ENCODE measurements at regions of chr7 and their contacts with region 1.

Region 1: GRCh38 chr7:38178004-38178694 is at the start of gene STARD3NL:
- DNase-seq: peak; percentile 92
- H3K4me3 Mint-ChIP-seq: peak within 1 kb of the TSS; percentile 96
- H3K27ac Mint-ChIP-seq: peak within 1 kb of the TSS; percentile 90
- H3K4me1 Mint-ChIP-seq: peaks cover 32% of the 10 kb centered on the region
- H3K27me3 Mint-ChIP-seq: peaks cover 9% of the 10 kb centered on the region
- total RNA-seq, gene STARD3NL: 34.4 to 34.7 TPM

Region 2: GRCh38 chr7:38107486-38107893 is 70.7 kb before region 1 on chr7:
- CTCF ChIA-PET with region 1: interaction called, 5 read pairs
- POLR2A ChIA-PET with region 1: no interaction called
- intact Hi-C with region 1: loop called (anchors 2 kb)
- DNase-seq: peak; percentile 73
- H3K4me3 Mint-ChIP-seq: no peak overlapping the region
- H3K27ac Mint-ChIP-seq: no peak overlapping the region
- H3K4me1 Mint-ChIP-seq: no peaks in the 10 kb centered on the region
- H3K27me3 Mint-ChIP-seq: peaks cover 13% of the 10 kb centered on the region

Region 3: GRCh38 chr7:38360776-38361175 is 182.6 kb after region 1 on chr7:
- CTCF ChIA-PET with region 1: interaction called, 4 read pairs
- POLR2A ChIA-PET with region 1: no interaction called
- intact Hi-C with region 1: loop called (anchors 2 kb)
- DNase-seq: no peak
- H3K4me3 Mint-ChIP-seq: peak overlapping the region; percentile 88
- H3K27ac Mint-ChIP-seq: peak overlapping the region; percentile 99
- H3K4me1 Mint-ChIP-seq: peaks cover 48% of the 10 kb centered on the region
- H3K27me3 Mint-ChIP-seq: no peaks in the 10 kb centered on the region

Measured in activated CD4-positive, alpha-beta memory T cell treated with anti-CD3 and anti-CD28 coated beads for 36 hours (primary cell).